Thyroid gland (tissue), 4 donors: ENCODE measurements at regions of chr6 and their contacts with region 1.

Region 1: GRCh38 chr6:28940858-28941680 is 17.3 kb upstream of the TRIM27 start:
- DNase-seq: peak; percentile 75 to 77
- H3K4me3 ChIP-seq: peak overlapping the region in 2 of 3 donors; percentile 39 to 47
- H3K27ac ChIP-seq: peak overlapping the region; percentile 63 to 86 (median 82)
- H3K4me1 ChIP-seq: peaks cover 5 to 7% of the 10 kb centered on the region in 2 donors
- H3K27me3 ChIP-seq: no peaks in the 10 kb centered on the region
- CTCF ChIP-seq: no peak
- POLR2A ChIP-seq: no peak

Region 2: GRCh38 chr6:28981833-28982475 is 40.9 kb after region 1 on chr6:
- intact Hi-C with region 1: loop called (anchors 5 kb)
- DNase-seq: peak; percentile 75 to 80
- H3K4me3 ChIP-seq: peak overlapping the region; percentile 38 to 97 (median 43)
- H3K27ac ChIP-seq: peak overlapping the region; percentile 75 to 85 (median 81)
- H3K4me1 ChIP-seq: peaks cover 0 to 6% of the 10 kb centered on the region in 2 donors
- H3K27me3 ChIP-seq: no peaks in the 10 kb centered on the region
- CTCF ChIP-seq: peak in 1 of 6 experiments; percentile 28
- POLR2A ChIP-seq: peak in 1 of 2 donors; percentile 13